MCF 10A (cell line): ENCODE measurements at regions of chr5 and their contacts with region 1.

Region 1: GRCh38 chr5:126234563-126235195 is 188.5 kb upstream of the GRAMD2B start:
- DNase-seq: peak; percentile 68
- H3K4me3 Mint-ChIP-seq: no peak overlapping the region
- H3K27ac Mint-ChIP-seq: no peak overlapping the region
- H3K4me1 Mint-ChIP-seq: peaks cover 5% of the 10 kb centered on the region
- H3K27me3 Mint-ChIP-seq: no peaks in the 10 kb centered on the region
- CTCF ChIP-seq: peak; percentile 66

Region 2: DNA sequence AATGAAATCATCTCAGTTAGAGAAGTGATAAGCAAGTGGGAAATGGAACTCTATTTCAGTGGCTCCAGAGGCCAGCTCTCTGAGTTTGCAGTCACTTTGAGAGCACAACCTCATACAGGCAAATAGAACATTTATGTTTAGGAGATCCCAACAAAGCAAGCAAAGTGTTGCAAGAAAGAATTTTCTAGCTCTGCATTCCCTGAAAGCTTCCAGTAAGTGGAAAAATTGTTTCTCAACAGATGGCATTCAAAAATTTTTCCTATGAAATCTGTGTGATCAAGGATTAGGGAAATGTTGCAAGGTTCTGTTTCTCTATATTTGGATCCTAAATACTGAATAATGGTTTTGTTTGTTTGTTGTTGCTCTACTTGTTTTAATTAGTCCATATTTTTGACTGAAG is 724.0 kb before region 1 on chr5:
- CTCF ChIA-PET with region 1: no interaction called
- POLR2A ChIA-PET with region 1: no interaction called
- intact Hi-C with region 1: no loop called
- DNase-seq: no peak
- H3K4me3 Mint-ChIP-seq: no peak overlapping the region
- H3K27ac Mint-ChIP-seq: no peak overlapping the region
- H3K4me1 Mint-ChIP-seq: no peaks in the 10 kb centered on the region
- H3K27me3 Mint-ChIP-seq: no peaks in the 10 kb centered on the region
- CTCF ChIP-seq: no peak

Region 3: DNA sequence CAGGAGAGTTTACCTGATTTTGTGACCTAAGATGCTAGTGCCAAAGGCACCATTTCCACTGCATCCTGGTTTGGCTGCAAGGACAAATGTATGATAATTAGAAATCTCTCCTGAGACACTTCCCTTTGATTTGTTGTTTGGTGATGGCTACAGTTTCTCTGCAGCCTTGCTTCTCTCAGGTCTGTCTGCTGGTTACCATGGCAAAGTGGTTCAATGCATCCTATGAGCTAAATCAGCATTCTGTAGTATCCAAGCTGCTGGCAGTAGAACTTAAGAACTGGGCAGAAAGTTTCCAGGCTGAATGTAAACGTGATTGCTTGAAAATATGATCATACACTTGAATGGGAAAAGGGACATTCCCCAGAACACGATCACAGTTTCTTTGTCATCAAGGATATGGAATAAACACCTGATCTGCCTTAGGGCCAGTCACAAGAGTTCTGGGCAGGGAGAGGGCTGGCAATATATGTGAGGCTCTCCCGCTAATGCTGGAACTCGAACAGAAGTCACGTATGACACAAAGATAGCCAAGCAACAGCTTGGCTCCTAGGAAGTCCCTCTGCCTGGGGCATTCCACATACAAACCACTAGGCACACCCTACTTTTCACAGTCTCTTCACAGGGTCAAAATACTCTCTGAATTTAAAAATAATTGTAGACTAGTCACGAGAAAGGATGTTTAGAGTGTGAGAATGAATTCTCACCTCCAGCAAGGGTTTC is 50.5 kb after region 1 on chr5:
- CTCF ChIA-PET with region 1: no interaction called
- POLR2A ChIA-PET with region 1: no interaction called
- intact Hi-C with region 1: no loop called
- DNase-seq: no peak
- H3K4me3 Mint-ChIP-seq: no peak overlapping the region
- H3K27ac Mint-ChIP-seq: no peak overlapping the region
- H3K4me1 Mint-ChIP-seq: no peaks in the 10 kb centered on the region
- H3K27me3 Mint-ChIP-seq: no peaks in the 10 kb centered on the region
- CTCF ChIP-seq: no peak

Region 4: GRCh38 chr5:126531543-126532120 is 297.0 kb after region 1 on chr5:
- CTCF ChIA-PET with region 1: interaction called, 3 read pairs
- POLR2A ChIA-PET with region 1: no interaction called
- intact Hi-C with region 1: loop called (anchors 10 kb)
- DNase-seq: no peak
- H3K4me3 Mint-ChIP-seq: no peak overlapping the region
- H3K27ac Mint-ChIP-seq: no peak overlapping the region
- H3K4me1 Mint-ChIP-seq: peaks cover 1% of the 10 kb centered on the region
- H3K27me3 Mint-ChIP-seq: no peaks in the 10 kb centered on the region
- CTCF ChIP-seq: no peak